HEK293T (cell line): ENCODE measurements at regions of chr12 and their contacts with region 1.

Region 1: GRCh38 chr12:27523642-27524493 is at the start of gene PPFIBP1:
- DNase-seq: peak; percentile 97

Region 2: GRCh38 chr12:27534060-27534764 is 10.3 kb after region 1 on chr12:
- CTCF ChIA-PET with region 1: no interaction called
- POLR2A ChIA-PET with region 1: interaction called, 14 read pairs
- DNase-seq: no peak

Region 3: DNA sequence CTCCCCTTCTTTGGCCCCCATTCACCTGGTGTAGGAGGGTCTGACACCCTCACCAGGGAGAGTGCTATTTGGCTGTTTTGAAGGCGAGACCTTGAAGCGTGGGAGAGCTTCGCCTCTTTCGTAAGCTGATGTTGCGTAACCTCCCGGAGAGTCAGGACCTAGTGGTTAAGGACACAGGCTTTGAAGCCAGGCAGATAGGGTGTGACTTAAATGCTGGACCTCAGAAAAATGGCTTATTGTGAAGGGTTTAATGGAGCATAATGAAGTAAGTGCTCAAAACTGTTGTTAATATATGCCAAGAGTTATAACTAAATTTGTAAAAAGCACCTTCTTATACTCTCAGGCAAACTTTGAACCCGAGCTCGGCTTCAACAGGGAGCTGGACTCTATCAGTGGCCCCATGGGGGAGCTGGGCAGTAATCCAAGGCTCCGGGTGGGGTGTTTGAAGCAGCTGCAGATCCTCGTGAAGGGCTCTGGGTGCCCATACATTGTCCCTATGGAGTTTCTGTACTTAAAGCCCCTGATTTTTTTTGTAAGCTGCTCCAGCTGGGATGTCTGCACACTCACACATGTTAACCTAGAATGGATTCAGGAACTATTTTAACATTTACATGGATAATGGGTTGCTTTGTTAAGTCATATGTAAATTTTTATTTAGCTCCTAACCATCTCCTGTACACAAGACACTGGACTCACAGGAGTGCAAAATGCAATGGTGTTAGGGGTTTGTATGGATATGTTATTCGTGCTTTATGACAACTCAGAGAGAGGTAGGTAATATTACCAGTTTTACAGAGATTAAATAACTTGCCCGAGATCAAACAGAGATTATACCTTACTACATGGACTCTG is 26.2 kb after region 1 on chr12:
- CTCF ChIA-PET with region 1: interaction called, 4 read pairs
- POLR2A ChIA-PET with region 1: interaction called, 10 read pairs
- DNase-seq: peak; percentile 53